Stomach (tissue), 19 donors: ENCODE measurements at regions of chrX and their contacts with region 1.

Region 1: DNA sequence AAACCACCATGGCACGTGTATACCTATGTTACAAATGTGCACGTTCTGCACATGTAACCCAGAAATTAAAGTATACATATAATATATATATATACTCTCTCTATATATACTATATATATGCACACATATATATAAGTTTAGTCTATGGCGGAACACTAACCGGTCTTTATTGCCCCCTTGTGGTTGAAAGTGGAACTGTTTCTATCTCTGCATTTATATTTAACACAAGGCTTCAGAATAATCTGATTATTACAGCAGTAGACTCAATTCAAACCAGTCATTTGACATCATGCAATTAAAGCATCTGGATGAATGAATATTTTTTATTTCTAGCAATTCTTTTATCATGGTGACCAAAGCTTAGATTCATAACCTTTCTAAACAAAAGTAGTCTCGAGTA is 14.6 kb downstream of the RAB9B start:
- DNase-seq: peak in 1 of 2 donors; percentile 80
- H3K4me3 ChIP-seq: no peak overlapping the region
- H3K27ac ChIP-seq: no peak overlapping the region
- H3K4me1 ChIP-seq: no peaks in the 10 kb centered on the region
- H3K27me3 ChIP-seq: no peaks in the 10 kb centered on the region
- CTCF ChIP-seq: peak in 4 of 7 experiments; percentile 58 to 92 (median 84)
- EP300 ChIP-seq: no peak
- POLR2A ChIP-seq: no peak

Region 2: GRCh38 chrX:103533511-103534216 is 283.8 kb before region 1 on chrX:
- intact Hi-C with region 1: loop called (anchors 10 kb)
- DNase-seq: peak; percentile 83 to 88
- H3K4me3 ChIP-seq: peak overlapping the region; percentile 23 to 39 (median 34)
- H3K27ac ChIP-seq: peak overlapping the region in 1 of 5 donors; percentile 68
- H3K4me1 ChIP-seq: peaks cover 0 to 7% (median 0%) of the 10 kb centered on the region in 4 donors
- H3K27me3 ChIP-seq: peaks cover 0 to 1% (median 0%) of the 10 kb centered on the region in 3 donors
- CTCF ChIP-seq: peak in 5 of 7 experiments; percentile 29 to 88 (median 79)
- EP300 ChIP-seq: no peak
- POLR2A ChIP-seq: no peak